ENCODE measurements at regions of chr19 and their contacts with region 1.

Region 1: GRCh38 chr19:18408053-18408476 is 10.6 kb upstream of the LRRC25 start:
- DNase-seq: peak; percentile 82
- CTCF ChIP-seq: peak; percentile 52

Region 2: GRCh38 chr19:18203863-18204393 is 204.1 kb before region 1 on chr19 and contains the start of gene RAB3A:
- CTCF ChIA-PET with region 1: interaction called, 21 read pairs
- POLR2A ChIA-PET with region 1: no interaction called
- DNase-seq: peak; percentile 99
- CTCF ChIP-seq: no peak

Region 3: DNA sequence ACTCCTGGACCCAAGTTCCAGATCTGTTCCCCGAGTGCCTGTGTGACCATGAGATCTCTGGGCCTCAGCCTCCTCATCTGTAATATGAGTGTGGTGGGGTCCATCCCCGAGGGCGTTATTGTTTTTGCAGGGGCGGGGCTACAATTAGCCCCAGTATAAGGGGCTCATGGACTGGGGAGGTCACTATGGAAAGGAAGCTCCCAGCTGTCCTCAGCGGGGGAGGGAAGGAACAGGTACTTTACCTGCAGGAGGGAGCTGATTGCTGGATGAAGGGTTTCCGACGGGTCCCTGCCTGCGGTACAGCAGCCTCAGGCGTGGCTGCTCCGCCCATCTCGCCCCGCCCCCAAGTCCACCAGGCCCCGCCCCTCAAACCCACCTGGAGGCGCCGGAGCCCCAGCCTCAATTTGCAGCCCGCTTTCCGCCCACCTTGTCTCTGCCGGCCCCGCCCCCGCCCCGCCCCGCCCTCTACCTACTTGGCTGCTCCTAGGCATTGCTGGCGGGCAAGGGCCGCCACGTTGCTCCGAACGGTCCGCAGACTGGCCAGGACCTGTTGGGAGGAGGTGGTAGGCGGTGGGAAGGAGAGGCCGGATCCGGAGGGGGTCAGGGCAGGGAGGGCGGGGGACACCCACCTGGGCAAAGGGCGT is 187.3 kb before region 1 on chr19:
- CTCF ChIA-PET with region 1: no interaction called
- POLR2A ChIA-PET with region 1: no interaction called
- DNase-seq: no peak
- CTCF ChIP-seq: no peak

Region 4: GRCh38 chr19:18322759-18323460 is 85.2 kb before region 1 on chr19 and contains the start of gene LSM4:
- CTCF ChIA-PET with region 1: interaction called, 58 read pairs
- POLR2A ChIA-PET with region 1: no interaction called
- DNase-seq: peak; percentile 99
- CTCF ChIP-seq: peak; percentile 41

Region 5: GRCh38 chr19:18340190-18340989 is 67.7 kb before region 1 on chr19 and contains the start of gene PGPEP1:
- CTCF ChIA-PET with region 1: interaction called, 21 read pairs
- POLR2A ChIA-PET with region 1: no interaction called
- DNase-seq: peak; percentile 91
- CTCF ChIP-seq: no peak

Region 6: DNA sequence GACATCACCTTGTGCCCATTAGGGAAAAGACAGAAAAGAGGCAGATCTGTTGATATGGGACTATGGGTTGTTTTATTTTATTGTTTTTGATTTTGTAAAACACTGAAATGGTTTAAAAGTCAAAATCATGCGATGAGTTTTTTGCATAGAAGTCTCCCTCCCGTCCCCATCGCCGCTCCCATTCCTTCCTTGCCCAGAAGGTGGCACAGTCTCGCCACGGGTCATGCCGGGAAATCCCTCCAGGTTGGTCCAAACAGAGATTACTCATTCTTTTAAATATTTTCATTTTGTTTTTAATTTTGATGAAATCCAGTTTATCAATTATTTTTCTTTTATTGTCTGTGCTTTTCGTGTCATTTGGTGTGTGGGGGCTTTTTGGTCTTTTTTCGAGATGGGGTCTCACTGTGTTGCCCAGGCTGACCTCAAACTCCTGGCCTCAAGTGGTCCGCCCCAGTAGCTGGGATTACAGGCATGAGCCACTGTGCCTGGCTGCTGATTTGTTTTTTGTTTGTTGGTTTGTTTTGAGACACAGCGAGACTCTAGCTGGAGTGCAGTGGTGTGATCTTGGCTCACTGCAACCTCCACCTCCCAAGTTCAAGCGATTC is 58.4 kb before region 1 on chr19:
- CTCF ChIA-PET with region 1: interaction called, 42 read pairs
- POLR2A ChIA-PET with region 1: no interaction called
- DNase-seq: peak; percentile 68
- CTCF ChIP-seq: peak; percentile 67

Region 7: DNA sequence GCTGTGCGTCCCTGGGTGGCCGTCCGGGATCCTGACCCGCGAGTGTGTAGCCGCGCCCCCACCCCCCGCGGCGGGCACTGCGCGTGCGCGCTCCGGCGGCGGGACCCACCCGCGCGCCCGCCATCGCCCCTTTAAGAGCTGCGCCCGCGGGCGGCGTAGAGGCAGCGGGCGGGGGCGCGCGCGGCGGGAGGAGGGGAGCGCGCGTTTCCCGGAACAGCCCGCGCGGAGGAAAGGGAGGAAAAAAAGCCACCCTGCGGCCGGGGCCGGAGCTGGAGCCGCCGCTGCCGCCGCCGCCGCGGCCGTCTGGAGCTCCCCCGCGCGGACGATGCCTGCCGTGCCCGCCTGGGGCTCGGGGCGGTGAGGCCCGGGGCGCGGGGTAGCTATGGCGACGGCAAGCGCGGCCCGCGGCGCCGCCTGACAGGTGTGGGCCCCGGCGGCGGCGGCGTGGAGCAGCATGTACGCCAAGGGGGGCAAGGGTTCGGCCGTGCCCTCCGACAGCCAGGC is 11.2 kb after region 1 on chr19 and contains the start of gene SSBP4:
- CTCF ChIA-PET with region 1: interaction called, 11 read pairs
- POLR2A ChIA-PET with region 1: no interaction called
- DNase-seq: peak; percentile 91
- CTCF ChIP-seq: peak; percentile 30

Region 8: DNA sequence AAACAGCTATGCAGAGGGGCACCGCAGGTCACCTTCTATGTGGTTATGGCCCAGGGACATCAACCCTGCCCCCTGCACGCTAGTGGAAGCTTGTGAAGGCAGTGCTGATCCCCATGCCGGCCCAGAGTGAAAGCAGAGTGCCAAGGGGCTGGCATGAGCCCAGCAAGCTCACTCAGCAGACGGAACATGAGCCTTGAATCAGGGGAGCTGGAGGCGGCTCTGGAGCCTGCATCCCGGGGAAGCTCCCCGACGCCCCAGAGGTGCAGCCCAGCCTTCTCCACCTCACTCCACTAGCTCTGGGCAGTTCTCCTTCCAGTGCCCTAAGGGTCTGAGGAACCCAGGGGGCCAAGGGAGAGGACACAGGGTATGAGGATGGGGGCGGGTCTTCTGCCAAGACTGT is 48.9 kb after region 1 on chr19:
- CTCF ChIA-PET with region 1: no interaction called
- POLR2A ChIA-PET with region 1: no interaction called
- DNase-seq: no peak
- CTCF ChIP-seq: no peak